Activated B cell treated with CpG ODN at 0.5 μM for 24 hours (primary cell): ENCODE measurements at regions of chr19 and their contacts with region 1.

Region 1: GRCh38 chr19:20077791-20078463 is at the start of gene ZNF90:
- DNase-seq: peak; percentile 73
- ATAC-seq: peak; percentile 99
- H3K4me3 Mint-ChIP-seq: peak within 1 kb of the TSS; percentile 96
- H3K27ac Mint-ChIP-seq: peak within 1 kb of the TSS; percentile 69
- H3K4me1 Mint-ChIP-seq: peaks cover 18% of the 10 kb centered on the region
- H3K27me3 Mint-ChIP-seq: no peaks in the 10 kb centered on the region
- CTCF ChIP-seq: no peak
- total RNA-seq, gene ZNF90: 9.8 and 12.5 TPM in 2 replicates

Region 2: DNA sequence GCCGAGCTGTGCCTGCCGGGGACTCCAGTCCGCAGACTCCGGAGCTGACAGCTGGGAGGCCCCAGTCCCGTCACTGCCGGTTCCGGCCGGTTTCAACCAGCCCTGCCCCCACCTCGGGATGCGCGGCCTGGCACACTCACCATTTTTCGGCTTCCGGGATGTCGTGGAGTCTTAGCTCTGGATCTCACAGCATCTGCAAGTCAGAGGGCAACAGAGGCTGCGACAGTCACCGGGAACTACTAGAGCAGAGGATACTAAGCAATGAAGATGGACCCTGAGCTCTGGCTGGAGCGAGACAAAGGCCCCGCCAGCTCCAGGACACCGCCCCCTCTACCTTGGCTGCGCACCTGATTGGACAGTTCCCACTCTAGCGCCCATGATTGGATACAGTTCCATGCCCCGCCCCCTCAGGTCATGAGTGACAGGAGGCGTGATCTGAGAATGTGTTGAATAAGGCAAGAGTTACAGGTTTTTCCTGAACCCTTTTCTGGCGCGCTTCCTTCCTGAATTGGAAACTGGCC is 38.7 kb before region 1 on chr19 and contains the start of gene ZNF682:
- CTCF ChIA-PET with region 1: no interaction called
- POLR2A ChIA-PET with region 1: interaction called, 13 read pairs
- intact Hi-C with region 1: loop called (anchors 1 kb)
- DNase-seq: peak; percentile 85
- ATAC-seq: peak; percentile 100
- H3K4me3 Mint-ChIP-seq: peak within 1 kb of the TSS; percentile 98
- H3K27ac Mint-ChIP-seq: peak within 1 kb of the TSS; percentile 92
- H3K4me1 Mint-ChIP-seq: peaks cover 14% of the 10 kb centered on the region
- H3K27me3 Mint-ChIP-seq: no peaks in the 10 kb centered on the region
- CTCF ChIP-seq: no peak
- total RNA-seq, gene ZNF682: 15.5 and 19.9 TPM in 2 replicates

Region 3: GRCh38 chr19:20051841-20052768 is 25.8 kb before region 1 on chr19:
- CTCF ChIA-PET with region 1: no interaction called
- POLR2A ChIA-PET with region 1: interaction called, 29 read pairs
- intact Hi-C with region 1: loop called (anchors 1 kb)
- DNase-seq: peak; percentile 55
- ATAC-seq: peak; percentile 95
- H3K4me3 Mint-ChIP-seq: peak overlapping the region; percentile 98
- H3K27ac Mint-ChIP-seq: peak overlapping the region; percentile 96
- H3K4me1 Mint-ChIP-seq: peaks cover 14% of the 10 kb centered on the region
- H3K27me3 Mint-ChIP-seq: no peaks in the 10 kb centered on the region
- CTCF ChIP-seq: no peak

Region 4: GRCh38 chr19:20565321-20566018 is 487.5 kb after region 1 on chr19 and contains the start of gene ZNF737:
- CTCF ChIA-PET with region 1: no interaction called
- POLR2A ChIA-PET with region 1: interaction called, 7 read pairs
- intact Hi-C with region 1: loop called (anchors 10 kb)
- DNase-seq: peak; percentile 72
- ATAC-seq: peak; percentile 90
- H3K4me3 Mint-ChIP-seq: peak within 1 kb of the TSS; percentile 99
- H3K27ac Mint-ChIP-seq: peak within 1 kb of the TSS; percentile 99
- H3K4me1 Mint-ChIP-seq: peaks cover 32% of the 10 kb centered on the region
- H3K27me3 Mint-ChIP-seq: no peaks in the 10 kb centered on the region
- CTCF ChIP-seq: no peak
- total RNA-seq, gene ZNF737: 42.7 and 50.9 TPM in 2 replicates